ENCODE measurements at regions of chr1 and their contacts with region 1.

Region 1: DNA sequence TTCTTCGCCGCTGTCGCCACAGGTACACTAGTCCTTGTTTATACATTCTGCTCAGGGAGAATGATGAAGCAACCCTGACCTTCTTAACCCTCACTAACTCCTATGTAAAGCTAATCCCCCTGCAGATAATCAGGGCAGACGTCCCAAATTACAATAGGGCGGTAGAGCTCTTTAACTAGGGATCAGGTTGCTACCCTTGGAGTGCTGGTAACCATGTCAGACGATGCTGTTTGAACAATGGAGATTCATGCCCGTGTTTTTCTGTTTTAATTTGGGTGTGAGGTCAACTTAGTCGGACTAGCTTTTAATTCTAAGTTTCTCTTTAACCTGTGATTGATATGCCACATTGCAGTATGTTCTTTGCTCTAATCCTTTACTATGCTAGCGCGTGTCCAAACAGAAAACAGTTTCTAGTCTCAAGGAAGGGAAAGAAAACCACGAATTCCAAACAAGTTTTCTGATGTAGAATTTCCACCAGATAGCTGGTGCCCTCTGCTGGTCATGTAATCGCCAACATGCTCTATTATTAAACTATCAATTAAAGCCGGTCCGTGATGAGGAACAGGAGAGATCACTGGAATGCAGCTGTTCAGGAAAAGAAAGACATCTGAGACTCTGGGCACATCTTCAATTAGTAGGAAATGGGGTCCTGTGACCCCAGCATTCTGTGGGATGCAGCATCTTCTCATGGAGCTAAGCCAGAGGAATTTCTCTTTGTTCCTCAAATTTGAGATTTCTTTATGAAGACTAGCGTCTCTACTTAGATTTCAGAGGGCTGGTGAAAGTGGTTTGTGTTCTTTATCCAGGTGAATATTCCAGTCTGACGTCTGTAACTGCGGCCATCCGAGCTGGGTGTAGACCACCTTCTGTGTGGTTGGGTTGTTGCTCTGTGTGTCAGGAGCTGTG is 18.3 kb upstream of the VAMP3 start:
- DNase-seq: peak; percentile 78
- H3K4me3 ChIP-seq: peak overlapping the region; percentile 28
- H3K27ac ChIP-seq: no peak overlapping the region
- H3K4me1 ChIP-seq: peaks cover 8% of the 10 kb centered on the region
- H3K27me3 ChIP-seq: no peaks in the 10 kb centered on the region
- CTCF ChIP-seq: peak; percentile 85

Region 2: GRCh38 chr1:7667625-7668218 is 85.0 kb before region 1 on chr1:
- CTCF ChIA-PET with region 1: interaction called, 108 read pairs
- POLR2A ChIA-PET with region 1: no interaction called
- intact Hi-C with region 1: loop called (anchors 1 kb)
- DNase-seq: peak; percentile 87
- H3K4me3 ChIP-seq: no peak overlapping the region
- H3K27ac ChIP-seq: no peak overlapping the region
- H3K4me1 ChIP-seq: peaks cover 4% of the 10 kb centered on the region
- H3K27me3 ChIP-seq: no peaks in the 10 kb centered on the region
- CTCF ChIP-seq: peak; percentile 99

Region 3: GRCh38 chr1:7680207-7680954 is 72.4 kb before region 1 on chr1:
- CTCF ChIA-PET with region 1: no interaction called
- POLR2A ChIA-PET with region 1: no interaction called
- intact Hi-C with region 1: no loop called
- DNase-seq: peak; percentile 70
- H3K4me3 ChIP-seq: peak overlapping the region; percentile 66
- H3K27ac ChIP-seq: peak overlapping the region; percentile 86
- H3K4me1 ChIP-seq: peaks cover 11% of the 10 kb centered on the region
- H3K27me3 ChIP-seq: no peaks in the 10 kb centered on the region
- CTCF ChIP-seq: no peak

Region 4: DNA sequence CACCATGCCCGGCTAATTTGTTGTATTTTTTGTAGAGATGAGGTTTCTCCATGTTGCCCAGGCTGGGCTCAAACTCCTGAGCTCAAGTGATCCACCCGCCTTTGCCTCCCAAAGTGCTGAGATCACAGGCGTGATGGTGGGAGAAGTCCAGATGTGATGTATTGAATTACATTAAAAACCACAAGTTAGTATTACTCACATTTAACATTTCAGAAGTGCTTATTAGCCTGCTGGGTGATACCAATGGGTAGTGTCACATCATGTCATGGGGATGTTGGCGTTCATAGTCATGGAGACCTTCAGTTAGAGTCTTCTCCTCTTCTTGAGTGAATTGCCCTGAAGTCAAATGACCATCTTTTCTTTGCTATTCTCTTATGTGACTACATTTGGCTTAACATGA is 45.2 kb before region 1 on chr1:
- CTCF ChIA-PET with region 1: interaction called, 11 read pairs
- POLR2A ChIA-PET with region 1: no interaction called
- intact Hi-C with region 1: no loop called
- DNase-seq: no peak
- H3K4me3 ChIP-seq: no peak overlapping the region
- H3K27ac ChIP-seq: no peak overlapping the region
- H3K4me1 ChIP-seq: no peaks in the 10 kb centered on the region
- H3K27me3 ChIP-seq: peaks cover 66% of the 10 kb centered on the region
- CTCF ChIP-seq: no peak